ENCODE measurements at regions of chr15 and their contacts with region 1.

Region 1: GRCh38 chr15:81265944-81266775 is 57.8 kb downstream of the STARD5 start:
- DNase-seq: peak; percentile 91
- H3K4me3 Mint-ChIP-seq: peak overlapping the region; percentile 27
- H3K27ac Mint-ChIP-seq: peak overlapping the region; percentile 47
- H3K4me1 Mint-ChIP-seq: peaks cover 40% of the 10 kb centered on the region
- H3K27me3 Mint-ChIP-seq: peaks cover 24% of the 10 kb centered on the region

Region 2: DNA sequence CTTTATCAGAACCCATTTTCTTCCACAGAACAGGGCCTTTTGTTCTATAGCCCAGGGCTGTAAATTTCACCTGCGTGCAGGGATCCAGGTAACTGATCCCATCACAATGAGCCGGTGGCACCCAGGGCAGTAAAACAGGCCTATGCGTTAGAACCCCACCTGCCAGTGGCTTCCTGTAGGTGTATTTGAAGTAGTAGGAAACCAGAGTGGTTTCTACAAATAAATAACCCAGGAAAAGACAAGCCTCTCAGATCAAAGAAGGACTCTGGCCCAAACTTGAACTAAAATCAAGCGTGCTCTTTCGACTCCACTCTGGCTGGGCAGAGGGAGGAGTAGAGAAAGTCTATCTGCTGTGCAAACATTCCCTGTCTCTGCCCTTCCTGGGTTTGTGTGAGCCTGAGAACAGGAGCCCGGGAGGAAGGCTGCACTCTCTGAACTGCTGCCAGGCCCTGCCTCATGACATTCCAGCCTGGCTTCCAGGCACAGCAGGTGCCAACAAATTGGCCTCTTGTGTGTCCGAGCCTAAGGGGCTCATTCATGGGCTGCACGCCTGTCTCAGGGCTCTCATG is 409.3 kb before region 1 on chr15:
- CTCF ChIA-PET with region 1: no interaction called
- DNase-seq: peak; percentile 38
- H3K4me3 Mint-ChIP-seq: peak overlapping the region; percentile 10
- H3K27ac Mint-ChIP-seq: peak overlapping the region; percentile 74
- H3K4me1 Mint-ChIP-seq: peaks cover 27% of the 10 kb centered on the region
- H3K27me3 Mint-ChIP-seq: peaks cover 34% of the 10 kb centered on the region

Region 3: GRCh38 chr15:80970018-80970658 is 296.0 kb before region 1 on chr15:
- CTCF ChIA-PET with region 1: interaction called, 13 read pairs
- DNase-seq: peak; percentile 70
- H3K4me3 Mint-ChIP-seq: no peak overlapping the region
- H3K27ac Mint-ChIP-seq: no peak overlapping the region
- H3K4me1 Mint-ChIP-seq: peaks cover 3% of the 10 kb centered on the region
- H3K27me3 Mint-ChIP-seq: no peaks in the 10 kb centered on the region

Region 4: DNA sequence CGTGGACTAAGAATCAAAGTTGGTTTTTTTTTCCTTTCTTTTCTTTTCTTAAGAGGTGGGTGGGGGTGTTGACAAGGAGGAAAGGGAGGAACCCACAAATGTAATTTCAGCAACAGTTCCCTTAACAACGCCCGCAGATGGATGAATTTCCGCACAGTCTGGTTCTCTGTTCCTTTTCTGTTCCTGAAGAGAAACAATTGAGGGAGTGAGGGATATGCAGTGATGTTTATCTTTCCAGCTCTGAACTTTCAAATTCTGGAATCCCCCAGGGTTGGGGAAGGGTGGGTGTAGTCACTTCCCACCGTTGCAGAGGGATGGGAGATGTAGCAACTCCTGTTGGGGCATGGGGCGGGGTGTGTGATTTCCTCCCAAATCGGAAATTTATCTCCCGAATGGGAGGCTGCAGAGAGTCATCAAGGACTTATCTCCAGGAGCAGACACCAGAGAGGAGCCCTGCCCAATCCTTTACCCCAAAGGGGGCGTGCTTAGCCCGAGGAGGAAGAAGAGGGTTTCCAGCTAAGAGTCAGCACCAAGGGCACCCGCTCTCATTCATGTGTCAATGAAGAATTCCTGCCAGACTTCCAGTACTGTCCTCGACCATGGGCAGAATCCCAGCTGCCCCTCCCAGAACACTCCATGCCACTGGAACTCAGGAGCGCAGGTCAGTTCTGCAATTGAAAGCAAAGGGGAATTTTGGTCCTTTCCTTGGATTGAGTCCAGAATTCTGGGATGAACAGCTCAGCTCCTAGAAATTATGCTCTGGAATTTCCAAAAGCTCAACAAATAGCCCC is 167.1 kb before region 1 on chr15:
- CTCF ChIA-PET with region 1: interaction called, 220 read pairs
- DNase-seq: no peak
- H3K4me3 Mint-ChIP-seq: peak overlapping the region; percentile 33
- H3K27ac Mint-ChIP-seq: peak overlapping the region; percentile 46
- H3K4me1 Mint-ChIP-seq: peaks cover 21% of the 10 kb centered on the region
- H3K27me3 Mint-ChIP-seq: peaks cover 69% of the 10 kb centered on the region

Region 5: GRCh38 chr15:81155375-81156218 is 110.6 kb before region 1 on chr15:
- CTCF ChIA-PET with region 1: interaction called, 262 read pairs
- DNase-seq: peak; percentile 47
- H3K4me3 Mint-ChIP-seq: no peak overlapping the region
- H3K27ac Mint-ChIP-seq: peak overlapping the region; percentile 40
- H3K4me1 Mint-ChIP-seq: peaks cover 23% of the 10 kb centered on the region
- H3K27me3 Mint-ChIP-seq: peaks cover 14% of the 10 kb centered on the region

Region 6: DNA sequence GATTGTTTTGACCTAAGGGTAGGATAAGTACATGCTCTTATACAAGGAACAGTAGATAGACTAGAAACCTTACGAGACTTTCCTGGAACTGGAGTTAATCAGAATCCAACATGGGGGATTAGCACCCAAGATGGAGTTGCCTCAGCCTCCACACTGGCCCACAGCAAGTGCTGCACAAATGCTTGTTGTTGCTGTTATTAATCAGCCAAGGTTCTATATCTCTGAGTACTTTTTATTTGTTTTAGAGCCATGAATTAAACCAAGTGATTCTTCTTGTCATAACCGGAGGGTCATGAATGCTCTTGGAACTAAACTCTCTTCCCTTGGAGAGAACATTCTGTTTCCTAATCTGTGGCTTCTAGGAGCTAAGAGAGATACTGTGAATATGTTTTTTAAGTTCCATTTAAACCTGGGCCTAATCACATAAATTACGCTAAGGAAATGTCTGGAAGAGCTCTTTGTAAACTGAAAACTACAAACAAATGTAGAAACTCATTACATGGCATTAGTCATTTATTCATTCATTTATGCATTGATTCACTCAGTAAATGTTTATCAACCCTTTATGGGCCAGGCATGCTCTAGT is 75.1 kb before region 1 on chr15:
- CTCF ChIA-PET with region 1: interaction called, 10 read pairs
- DNase-seq: no peak
- H3K4me3 Mint-ChIP-seq: no peak overlapping the region
- H3K27ac Mint-ChIP-seq: no peak overlapping the region
- H3K4me1 Mint-ChIP-seq: peaks cover 4% of the 10 kb centered on the region
- H3K27me3 Mint-ChIP-seq: peaks cover 43% of the 10 kb centered on the region

Region 7: GRCh38 chr15:81296673-81297072 is 30.5 kb after region 1 on chr15:
- CTCF ChIA-PET with region 1: interaction called, 11 read pairs
- DNase-seq: peak; percentile 87
- H3K4me3 Mint-ChIP-seq: peak overlapping the region; percentile 100
- H3K27ac Mint-ChIP-seq: peak overlapping the region; percentile 99
- H3K4me1 Mint-ChIP-seq: peaks cover 61% of the 10 kb centered on the region
- H3K27me3 Mint-ChIP-seq: no peaks in the 10 kb centered on the region

Measured in activated naive CD4-positive, alpha-beta T cell treated with anti-CD3 and anti-CD28 coated beads, Interleukin-2, amount 10 ng/mL, durations not matched to agents 7 days and 5 days (primary cell).